Common myeloid progenitor, CD34-positive (primary cell): ENCODE measurements at regions of chr10 and their contacts with region 1.

Region 1: DNA sequence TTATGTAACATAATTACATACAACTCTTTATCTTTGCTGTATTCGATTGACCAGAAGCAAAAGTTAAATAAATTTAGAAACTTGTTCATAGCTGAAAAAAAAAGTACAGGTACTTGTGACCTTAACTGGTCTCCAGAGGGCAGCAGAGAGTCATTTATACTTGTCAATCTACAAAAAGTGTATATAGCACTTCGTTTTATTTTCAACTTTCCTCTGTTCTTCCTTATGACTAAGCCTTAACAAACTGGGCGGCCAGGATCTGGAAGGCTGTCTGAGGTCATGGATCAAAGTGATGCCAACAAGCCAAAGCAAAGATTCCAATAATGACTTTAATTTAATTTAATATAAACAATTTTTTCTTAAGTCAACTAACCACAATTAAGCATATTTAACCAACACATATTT is 29.8 kb downstream of the C10orf67 start:
- DNase-seq: peak; percentile 64 to 84 (median 77)
- H3K4me3 ChIP-seq: no peak overlapping the region
- H3K27ac ChIP-seq: no peak overlapping the region
- H3K4me1 ChIP-seq: no peaks in the 10 kb centered on the region
- H3K27me3 ChIP-seq: peaks cover 0 to 8% (median 2%) of the 10 kb centered on the region in 5 experiments

Region 2: GRCh38 chr10:23158370-23158769 is 156.5 kb before region 1 on chr10:
- CTCF ChIA-PET with region 1: no interaction called
- POLR2A ChIA-PET with region 1: no interaction called
- DNase-seq: peak; percentile 56 to 74 (median 68)
- H3K4me3 ChIP-seq: peak overlapping the region in 1 of 7 experiments; percentile 38
- H3K27ac ChIP-seq: no peak overlapping the region
- H3K4me1 ChIP-seq: peaks cover 0 to 3% (median 1%) of the 10 kb centered on the region in 4 experiments
- H3K27me3 ChIP-seq: peaks cover 0 to 38% (median 7%) of the 10 kb centered on the region in 5 experiments

Region 3: DNA sequence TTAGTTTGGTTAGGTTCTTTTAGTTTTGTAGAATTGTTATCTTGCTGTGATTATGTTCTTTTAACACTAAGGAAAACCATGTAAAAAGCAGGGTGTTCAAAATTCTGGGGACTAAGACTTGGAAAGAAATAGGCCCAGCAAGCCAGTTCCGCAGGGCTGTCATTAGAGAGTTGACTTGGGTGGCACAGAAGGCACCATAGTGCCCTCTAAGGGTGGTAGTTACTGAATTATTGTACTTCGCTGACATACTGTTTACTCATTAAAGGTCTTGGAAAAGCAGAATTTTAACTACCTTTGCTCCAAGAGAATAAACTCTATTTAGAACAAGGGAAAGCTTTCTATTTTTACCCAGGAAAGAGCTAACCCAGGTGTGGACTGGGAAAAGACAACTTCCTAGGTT is 210.6 kb after region 1 on chr10:
- CTCF ChIA-PET with region 1: interaction called, 76 read pairs
- POLR2A ChIA-PET with region 1: no interaction called
- DNase-seq: peak; percentile 18 to 45 (median 28)
- H3K4me3 ChIP-seq: no peak overlapping the region
- H3K27ac ChIP-seq: no peak overlapping the region
- H3K4me1 ChIP-seq: no peaks in the 10 kb centered on the region
- H3K27me3 ChIP-seq: peaks cover 0 to 5% (median 0%) of the 10 kb centered on the region in 5 experiments